Left colon (tissue), 2 donors: ENCODE measurements at regions of chr19 and their contacts with region 1.

Region 1: DNA sequence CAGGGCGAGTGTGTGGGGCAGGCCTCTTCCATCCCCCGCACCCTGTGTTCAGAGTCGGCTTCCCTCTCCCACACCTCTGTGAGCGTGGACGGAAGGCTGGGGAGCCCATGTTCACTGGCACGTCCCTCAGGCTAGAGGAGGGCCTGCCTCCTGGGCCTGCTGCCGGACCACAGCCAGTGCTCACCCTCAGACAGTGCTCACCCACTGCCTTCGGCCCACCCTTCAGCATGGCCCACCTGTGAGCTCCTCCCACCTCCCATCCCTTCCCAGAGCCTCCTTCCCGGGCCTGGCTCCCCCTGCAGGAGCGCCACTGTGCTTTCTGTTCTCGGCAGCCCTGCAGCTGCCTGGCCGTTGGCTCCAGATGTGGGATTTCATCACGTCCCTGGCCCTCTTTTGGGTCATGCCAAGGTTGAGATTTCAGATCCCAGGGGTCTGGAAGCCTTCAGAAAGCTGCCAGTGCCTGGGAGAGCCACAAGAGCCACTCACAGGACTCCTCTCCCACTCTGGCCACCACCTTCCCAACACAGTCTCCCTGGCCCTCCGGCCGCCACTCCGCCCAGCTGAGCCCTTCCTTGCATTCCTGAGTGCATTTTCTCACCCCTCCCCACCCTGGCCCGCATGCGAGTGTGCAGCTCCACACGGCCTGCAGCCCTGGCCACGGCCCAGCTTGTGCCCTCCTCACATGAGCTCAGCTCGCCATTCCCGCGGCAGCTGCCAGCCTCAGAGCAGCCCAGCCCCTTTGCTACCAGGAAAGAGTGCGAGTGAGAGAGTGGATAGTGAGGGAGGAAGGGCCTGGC is 25.3 kb downstream of the CAPN12 start:
- DNase-seq: no peak
- ATAC-seq: peak; percentile 12

Region 2: GRCh38 chr19:38658462-38659306 is 60.3 kb before region 1 on chr19:
- intact Hi-C with region 1: loop called in 1 of 2 experiments (anchors 10 kb)
- DNase-seq: peak in 1 of 2 donors; percentile 72
- ATAC-seq: peak; percentile 64

Region 3: GRCh38 chr19:38683393-38684080 is 35.4 kb before region 1 on chr19:
- intact Hi-C with region 1: no loop called
- DNase-seq: peak; percentile 84 to 93
- ATAC-seq: peak; percentile 69

Region 4: GRCh38 chr19:39126591-39127187 is 407.7 kb after region 1 on chr19:
- intact Hi-C with region 1: no loop called
- DNase-seq: peak; percentile 79 to 85
- ATAC-seq: peak; percentile 77